Dendritic cell treated with granulocyte-macrophage colony-stimulating factor and Interleukin-4, amounts not matched to agents 40 ng/mL and 50 ng/mL, for 4 days (primary cell): ENCODE measurements at regions of chr1 and their contacts with region 1.

Region 1: GRCh38 chr1:32400876-32401631 is 6.8 kb upstream of the BSDC1 start:
- H3K4me3 Mint-ChIP-seq: no peak overlapping the region
- H3K27ac Mint-ChIP-seq: no peak overlapping the region
- H3K4me1 Mint-ChIP-seq: peaks cover 15% of the 10 kb centered on the region
- H3K27me3 Mint-ChIP-seq: no peaks in the 10 kb centered on the region

Region 2: GRCh38 chr1:32413507-32414185 is 12.6 kb after region 1 on chr1:
- intact Hi-C with region 1: loop called (anchors 2 kb)
- H3K4me3 Mint-ChIP-seq: no peak overlapping the region
- H3K27ac Mint-ChIP-seq: peak overlapping the region; percentile 54
- H3K4me1 Mint-ChIP-seq: peaks cover 4% of the 10 kb centered on the region
- H3K27me3 Mint-ChIP-seq: peaks cover 20% of the 10 kb centered on the region